MCF 10A (cell line): ENCODE measurements at regions of chr2 and their contacts with region 1.

Region 1: GRCh38 chr2:36411962-36412444 is 56.4 kb downstream of the CRIM1 start:
- DNase-seq: no peak
- H3K4me3 Mint-ChIP-seq: no peak overlapping the region
- H3K27ac Mint-ChIP-seq: peak overlapping the region; percentile 66
- H3K4me1 Mint-ChIP-seq: peaks cover 46% of the 10 kb centered on the region
- H3K27me3 Mint-ChIP-seq: no peaks in the 10 kb centered on the region
- CTCF ChIP-seq: no peak

Region 2: DNA sequence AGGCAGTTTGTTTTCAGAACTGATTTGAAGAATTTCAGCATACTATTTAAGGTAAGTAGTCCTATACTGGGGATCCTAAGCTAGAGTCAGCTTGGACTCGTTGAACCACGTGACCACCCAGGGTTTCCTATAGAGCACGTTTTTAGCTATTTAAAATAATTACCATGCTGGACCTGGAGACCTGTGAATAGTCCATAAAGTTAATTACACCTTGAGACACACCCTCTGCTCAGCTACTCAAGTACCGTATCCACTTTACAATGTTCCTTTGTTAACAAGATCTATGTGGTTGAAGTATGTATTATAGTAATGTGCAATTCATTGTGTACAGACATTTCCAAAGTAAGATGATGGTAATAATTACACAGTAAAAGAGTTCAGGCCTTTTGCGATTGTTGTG is 11.2 kb after region 1 on chr2:
- CTCF ChIA-PET with region 1: interaction called, 13 read pairs
- POLR2A ChIA-PET with region 1: interaction called, 3 read pairs
- intact Hi-C with region 1: no loop called
- DNase-seq: no peak
- H3K4me3 Mint-ChIP-seq: no peak overlapping the region
- H3K27ac Mint-ChIP-seq: no peak overlapping the region
- H3K4me1 Mint-ChIP-seq: peaks cover 10% of the 10 kb centered on the region
- H3K27me3 Mint-ChIP-seq: no peaks in the 10 kb centered on the region
- CTCF ChIP-seq: no peak